ENCODE measurements at regions of chr20 and their contacts with region 1.

Region 1: DNA sequence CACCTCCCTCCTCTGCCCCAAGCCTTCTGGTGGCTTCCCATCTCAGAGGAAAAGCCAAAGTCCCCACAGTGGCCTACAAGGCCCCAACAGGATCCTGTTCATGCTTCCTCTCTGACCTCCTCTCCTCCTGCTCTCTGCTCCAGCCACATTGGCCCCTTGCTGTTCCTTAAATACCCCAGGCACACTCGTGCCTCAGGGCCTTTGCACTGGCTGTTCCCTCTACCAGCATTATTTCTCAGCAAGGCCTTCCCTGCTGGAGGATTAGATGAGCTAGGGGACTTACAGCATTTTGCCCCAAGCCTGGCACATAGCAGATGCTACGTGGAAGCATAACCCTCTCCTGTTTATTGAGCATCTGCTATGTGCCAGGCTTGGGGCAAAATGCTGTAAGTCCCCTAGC is 7.8 kb downstream of the CCN5 start:
- DNase-seq: no peak
- H3K4me3 ChIP-seq: no peak overlapping the region
- H3K27ac ChIP-seq: no peak overlapping the region
- H3K27me3 ChIP-seq: peaks cover 2% of the 10 kb centered on the region
- CTCF ChIP-seq: no peak

Region 2: GRCh38 chr20:44153636-44154043 is 569.4 kb before region 1 on chr20:
- CTCF ChIA-PET with region 1: interaction called, 10 read pairs
- POLR2A ChIA-PET with region 1: no interaction called
- DNase-seq: no peak
- H3K4me3 ChIP-seq: no peak overlapping the region
- H3K27ac ChIP-seq: no peak overlapping the region
- H3K27me3 ChIP-seq: no peaks in the 10 kb centered on the region
- CTCF ChIP-seq: no peak

Measured in AG04450 (cell line).